Pancreas (tissue), 10 donors: ENCODE measurements at regions of chr12 and their contacts with region 1.

Region 1: DNA sequence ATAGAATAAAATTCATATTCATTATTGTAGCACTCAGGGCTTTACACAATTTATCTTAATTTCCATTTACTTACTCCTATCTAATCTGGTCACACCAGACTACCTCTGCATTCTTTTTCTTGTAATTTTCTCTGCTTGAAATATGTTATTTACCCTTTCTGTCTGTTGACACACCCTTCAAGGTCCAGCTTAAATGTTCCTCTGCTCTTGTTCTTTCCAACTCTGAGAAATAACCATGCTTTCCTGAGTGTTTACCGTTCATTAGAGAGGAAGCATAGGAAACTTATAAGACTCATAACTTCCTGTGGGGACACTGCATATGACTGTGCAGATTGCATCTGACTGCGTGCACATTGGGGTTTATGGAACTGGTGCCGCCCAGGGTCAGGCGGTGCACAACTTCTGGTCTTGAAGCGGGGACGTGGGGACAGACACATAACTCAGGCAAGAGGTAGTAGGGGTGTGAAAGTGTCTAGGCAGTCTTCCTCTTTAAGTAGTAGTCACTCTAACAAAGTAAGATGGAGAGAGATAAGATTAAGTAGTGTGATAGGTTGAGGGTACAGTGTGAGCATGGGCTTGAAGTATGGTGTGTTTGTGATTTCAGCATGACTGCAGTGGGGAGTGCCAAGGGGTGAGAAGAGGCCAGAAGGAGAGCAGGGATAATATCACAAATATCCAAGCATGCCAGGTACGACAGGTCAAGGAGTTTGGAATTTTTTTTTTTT is 42.5 kb upstream of the FOXJ2 start:
- DNase-seq: no peak
- ATAC-seq: peak in 3 of 4 donors; percentile 41 to 85 (median 70)
- H3K4me3 ChIP-seq: no peak overlapping the region
- H3K27ac ChIP-seq: peak overlapping the region in 1 of 4 donors; percentile 41
- H3K4me1 ChIP-seq: no peaks in the 10 kb centered on the region
- H3K27me3 ChIP-seq: no peaks in the 10 kb centered on the region
- CTCF ChIP-seq: no peak

Region 2: DNA sequence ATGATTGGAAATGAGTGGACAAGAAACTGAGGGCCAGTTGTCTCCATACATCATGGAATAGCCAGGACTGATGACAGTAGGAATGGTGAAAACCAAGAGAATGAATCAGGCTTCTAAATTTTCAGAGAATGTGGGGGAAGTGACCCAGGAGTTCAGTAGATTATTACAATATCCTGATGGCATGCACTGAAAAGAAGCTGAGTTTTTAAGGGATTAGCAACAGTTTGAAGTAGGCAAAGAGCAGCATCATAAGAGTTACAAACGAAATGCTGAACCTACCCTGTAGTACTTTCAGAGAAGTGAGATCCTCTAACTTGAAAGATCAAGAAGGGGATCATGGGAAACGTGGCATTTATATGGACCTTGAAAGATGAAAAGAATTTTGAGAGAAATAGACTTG is 130.4 kb before region 1 on chr12:
- intact Hi-C with region 1: loop called (anchors 5 to 10 kb)
- DNase-seq: no peak
- ATAC-seq: no peak
- H3K4me3 ChIP-seq: no peak overlapping the region
- H3K27ac ChIP-seq: no peak overlapping the region
- H3K4me1 ChIP-seq: no peaks in the 10 kb centered on the region
- H3K27me3 ChIP-seq: no peaks in the 10 kb centered on the region
- CTCF ChIP-seq: no peak

Region 3: DNA sequence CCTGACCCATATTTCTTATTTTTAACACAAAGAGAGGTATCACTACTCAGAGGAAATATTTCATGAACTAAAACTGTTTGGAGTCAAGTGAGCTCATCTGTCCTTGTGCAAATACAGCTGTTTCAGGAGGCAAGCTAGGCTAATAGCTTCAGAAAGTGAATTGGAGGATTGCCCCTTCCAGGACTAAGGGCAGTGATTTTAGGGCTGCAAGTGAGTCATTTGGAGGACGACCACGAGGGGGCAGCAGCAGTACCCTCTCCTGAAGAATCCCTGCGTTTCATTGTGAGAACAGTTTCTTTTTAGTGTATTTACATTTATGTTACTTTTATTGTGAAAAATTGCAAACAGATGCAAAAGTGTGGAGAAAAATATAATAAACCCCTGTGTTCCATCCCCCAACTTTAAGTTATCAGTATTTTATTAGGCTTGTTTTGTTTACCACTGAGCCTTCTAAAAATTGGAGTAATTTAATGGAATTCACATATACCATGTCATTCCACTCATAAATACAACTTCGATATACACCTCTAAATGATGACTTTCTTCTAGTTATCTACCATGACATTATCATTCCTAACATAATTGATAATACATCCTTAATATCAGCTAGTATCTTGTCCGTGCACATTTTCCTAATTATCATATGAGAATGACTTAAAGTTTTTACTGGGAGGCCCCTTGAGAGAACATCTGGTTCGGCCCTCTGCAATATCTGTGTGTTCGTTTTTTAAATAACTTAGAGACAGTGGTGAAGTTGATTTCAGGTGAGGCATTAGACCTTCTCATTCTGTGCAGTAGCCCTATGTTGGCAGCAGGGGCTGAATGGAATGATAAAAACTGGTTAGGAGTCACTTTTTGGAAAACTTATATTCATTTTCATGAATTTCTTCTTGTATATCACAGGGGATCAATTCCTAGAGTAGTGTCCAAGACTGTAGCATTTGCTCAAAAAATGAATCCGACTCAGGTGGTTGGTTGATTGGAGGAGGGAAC is 56.3 kb after region 1 on chr12:
- intact Hi-C with region 1: no loop called
- DNase-seq: peak in 5 of 6 donors; percentile 58 to 87 (median 75)
- ATAC-seq: peak; percentile 88 to 97 (median 94)
- H3K4me3 ChIP-seq: no peak overlapping the region
- H3K27ac ChIP-seq: no peak overlapping the region
- H3K4me1 ChIP-seq: no peaks in the 10 kb centered on the region
- H3K27me3 ChIP-seq: no peaks in the 10 kb centered on the region
- CTCF ChIP-seq: peak; percentile 70 to 82 (median 80)

Region 4: GRCh38 chr12:8709124-8709830 is 719.3 kb after region 1 on chr12:
- intact Hi-C with region 1: no loop called
- DNase-seq: no peak
- ATAC-seq: peak in 3 of 4 donors; percentile 57 to 81 (median 62)
- H3K4me3 ChIP-seq: peak overlapping the region in 1 of 4 donors; percentile 1
- H3K27ac ChIP-seq: no peak overlapping the region
- H3K4me1 ChIP-seq: no peaks in the 10 kb centered on the region
- H3K27me3 ChIP-seq: no peaks in the 10 kb centered on the region
- CTCF ChIP-seq: no peak